ENCODE measurements at regions of chr21 and their contacts with region 1.

Region 1: GRCh38 chr21:36966066-36966820 is at the start of gene HLCS:
- DNase-seq: peak; percentile 82
- H3K4me3 Mint-ChIP-seq: peak within 1 kb of the TSS; percentile 84
- H3K27ac Mint-ChIP-seq: peak within 1 kb of the TSS; percentile 82
- H3K4me1 Mint-ChIP-seq: peaks cover 12% of the 10 kb centered on the region
- H3K27me3 Mint-ChIP-seq: no peaks in the 10 kb centered on the region
- total RNA-seq, gene HLCS: 12.7 to 17.5 TPM

Region 2: DNA sequence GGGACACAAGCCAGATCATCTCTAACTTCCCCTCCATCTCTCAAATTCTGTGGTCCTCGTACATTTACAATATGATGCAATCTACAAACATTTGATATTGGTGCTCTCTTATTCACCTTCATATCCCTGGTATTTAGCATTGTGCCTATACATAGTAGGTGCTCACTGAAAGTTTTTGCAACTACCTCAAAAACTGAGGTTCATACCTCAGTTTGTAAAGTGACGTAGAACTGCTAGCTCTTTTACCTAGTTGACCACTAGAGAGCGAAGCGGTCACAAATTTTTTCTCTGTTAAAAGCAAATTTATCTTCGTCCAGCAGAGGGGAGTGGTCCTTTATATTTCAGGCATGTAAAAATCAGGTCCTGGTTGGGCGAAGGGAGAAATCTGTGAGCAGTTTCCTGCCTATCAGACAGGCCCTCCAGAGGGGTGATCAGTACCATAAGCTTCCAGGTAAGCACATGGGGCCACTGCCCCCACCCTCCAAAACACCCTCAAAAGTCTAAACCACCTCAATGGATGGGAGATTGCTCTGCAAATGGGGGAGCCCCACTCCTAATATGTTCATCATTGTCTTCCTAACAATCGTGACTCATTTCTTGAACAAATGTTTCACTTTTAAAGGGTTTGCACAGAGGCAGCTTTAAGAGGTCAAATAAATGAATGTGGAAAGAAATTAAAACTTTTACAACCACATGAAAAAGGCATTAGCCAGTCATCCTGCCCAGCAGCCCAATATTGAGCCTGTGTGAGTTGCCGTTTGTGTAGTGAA is 10.8 kb after region 1 on chr21:
- CTCF ChIA-PET with region 1: interaction called, 16 read pairs
- POLR2A ChIA-PET with region 1: interaction called, 3 read pairs
- intact Hi-C with region 1: no loop called
- DNase-seq: peak; percentile 63
- H3K4me3 Mint-ChIP-seq: no peak overlapping the region
- H3K27ac Mint-ChIP-seq: peak overlapping the region; percentile 40
- H3K4me1 Mint-ChIP-seq: peaks cover 21% of the 10 kb centered on the region
- H3K27me3 Mint-ChIP-seq: peaks cover 11% of the 10 kb centered on the region

Region 3: DNA sequence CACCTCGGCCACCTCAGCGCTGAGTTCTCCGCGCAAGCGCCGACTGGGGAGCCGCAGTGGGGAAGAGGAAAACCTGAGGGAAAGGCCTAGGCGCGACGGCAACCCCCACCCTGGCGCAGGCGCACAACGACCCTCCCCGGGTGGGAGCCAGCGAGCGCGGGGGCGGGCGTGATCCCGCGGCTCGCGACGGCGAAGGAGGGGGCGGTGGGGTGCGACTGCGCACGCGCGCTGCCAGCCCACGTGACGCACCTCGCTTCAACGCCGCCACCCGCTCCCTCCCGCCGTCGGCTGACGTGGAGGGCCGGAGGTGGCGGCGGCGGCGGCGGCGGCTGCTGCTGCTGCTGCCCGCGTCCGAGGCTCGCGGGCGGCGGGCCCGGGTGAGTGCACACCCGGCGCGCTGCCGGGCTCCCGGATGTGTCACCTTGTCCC is 106.8 kb after region 1 on chr21 and contains the starts of genes PIGP and TTC3:
- CTCF ChIA-PET with region 1: no interaction called
- POLR2A ChIA-PET with region 1: interaction called, 8 read pairs
- intact Hi-C with region 1: loop called (anchors 2 kb)
- DNase-seq: peak; percentile 97
- H3K4me3 Mint-ChIP-seq: peak within 1 kb of the TSS; percentile 99
- H3K27ac Mint-ChIP-seq: peak within 1 kb of the TSS; percentile 89
- H3K4me1 Mint-ChIP-seq: peaks cover 50% of the 10 kb centered on the region
- H3K27me3 Mint-ChIP-seq: no peaks in the 10 kb centered on the region
- total RNA-seq, gene PIGP: 19.2 to 21.2 TPM
- total RNA-seq, gene TTC3: 63.1 to 65.6 TPM

Region 4: DNA sequence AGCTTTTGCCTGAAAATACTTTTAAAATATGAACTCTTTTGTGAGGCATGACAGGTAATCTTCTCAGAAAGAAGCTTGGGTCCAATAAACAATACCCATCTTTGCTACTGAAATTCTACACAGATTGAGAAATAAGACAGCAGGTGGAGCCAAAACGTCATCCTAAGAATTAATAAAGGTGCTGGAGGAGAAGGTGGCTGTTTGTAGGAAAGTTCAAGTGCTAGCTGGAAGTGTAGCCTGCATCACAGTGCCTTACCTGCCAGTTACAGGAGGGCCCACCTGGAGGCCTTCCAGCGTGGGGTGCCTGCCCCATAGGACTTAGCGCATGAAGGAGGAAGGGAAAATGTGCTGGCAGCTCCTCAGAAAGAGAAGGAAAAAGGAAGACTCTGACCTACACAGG is 200.5 kb after region 1 on chr21:
- CTCF ChIA-PET with region 1: no interaction called
- POLR2A ChIA-PET with region 1: no interaction called
- intact Hi-C with region 1: no loop called
- DNase-seq: no peak
- H3K4me3 Mint-ChIP-seq: no peak overlapping the region
- H3K27ac Mint-ChIP-seq: no peak overlapping the region
- H3K4me1 Mint-ChIP-seq: no peaks in the 10 kb centered on the region
- H3K27me3 Mint-ChIP-seq: no peaks in the 10 kb centered on the region

Measured in activated CD4-positive, alpha-beta memory T cell treated with anti-CD3 and anti-CD28 coated beads for 36 hours (primary cell).